ENCODE measurements at regions of chr6 and their contacts with region 1.

Region 1: GRCh38 chr6:133040094-133040802 is 200.9 kb upstream of the EYA4 start:
- DNase-seq: peak in 1 of 9 donors; percentile 3
- ATAC-seq: no peak
- H3K4me3 ChIP-seq: no peak overlapping the region
- H3K4me3 Mint-ChIP-seq: no peak overlapping the region
- H3K27ac ChIP-seq: no peak overlapping the region
- H3K27ac Mint-ChIP-seq: no peak overlapping the region
- H3K4me1 ChIP-seq: no peaks in the 10 kb centered on the region
- H3K4me1 Mint-ChIP-seq: peaks cover 0 to 2% (median 0%) of the 10 kb centered on the region in 7 donors
- H3K27me3 ChIP-seq: no peaks in the 10 kb centered on the region
- H3K27me3 Mint-ChIP-seq: peaks cover 0 to 13% (median 7%) of the 10 kb centered on the region in 5 donors

Region 2: GRCh38 chr6:132962936-132963868 is 77.0 kb before region 1 on chr6:
- CTCF ChIA-PET with region 1: no interaction called
- POLR2A ChIA-PET with region 1: no interaction called
- intact Hi-C with region 1: loop called in 1 of 2 experiments (anchors 1 kb)
- DNase-seq: peak in 7 of 9 donors; percentile 6 to 64 (median 20)
- ATAC-seq: peak; percentile 65
- H3K4me3 ChIP-seq: no peak overlapping the region
- H3K4me3 Mint-ChIP-seq: no peak overlapping the region
- H3K27ac ChIP-seq: no peak overlapping the region
- H3K27ac Mint-ChIP-seq: no peak overlapping the region
- H3K4me1 ChIP-seq: no peaks in the 10 kb centered on the region
- H3K4me1 Mint-ChIP-seq: peaks cover 0 to 29% (median 0%) of the 10 kb centered on the region in 7 donors
- H3K27me3 ChIP-seq: no peaks in the 10 kb centered on the region
- H3K27me3 Mint-ChIP-seq: peaks cover 20 to 49% (median 36%) of the 10 kb centered on the region in 5 donors